CD8-positive, alpha-beta T cell (primary cell): ENCODE measurements at regions of chr21 and their contacts with region 1.

Region 1: DNA sequence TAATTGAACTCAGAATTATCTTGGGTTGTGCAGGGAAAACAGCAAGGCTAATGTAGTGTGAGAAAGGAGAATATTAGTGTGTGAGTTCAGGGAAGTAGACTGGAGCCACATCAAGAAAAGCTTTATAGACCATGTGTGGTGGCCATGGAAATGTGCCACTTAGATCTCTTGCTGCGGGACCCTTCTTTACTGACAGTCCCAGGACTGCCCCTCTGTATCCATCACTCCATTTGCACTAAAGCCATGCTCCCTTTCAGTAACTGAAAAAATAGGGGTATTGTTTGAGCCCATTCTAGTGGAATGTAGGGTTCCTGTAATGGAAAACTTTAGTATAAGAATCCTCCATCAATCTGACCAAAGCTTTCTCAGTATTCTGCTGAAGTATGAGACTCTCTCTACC is 32.3 kb downstream of the SAMSN1 start:
- DNase-seq: no peak
- ATAC-seq: no peak
- H3K4me3 ChIP-seq: no peak overlapping the region
- H3K4me3 Mint-ChIP-seq: no peak overlapping the region
- H3K27ac ChIP-seq: no peak overlapping the region
- H3K27ac Mint-ChIP-seq: no peak overlapping the region
- H3K4me1 ChIP-seq: no peaks in the 10 kb centered on the region
- H3K4me1 Mint-ChIP-seq: peaks cover 7% of the 10 kb centered on the region
- H3K27me3 ChIP-seq: no peaks in the 10 kb centered on the region
- H3K27me3 Mint-ChIP-seq: no peaks in the 10 kb centered on the region
- CTCF ChIP-seq: no peak

Region 2: DNA sequence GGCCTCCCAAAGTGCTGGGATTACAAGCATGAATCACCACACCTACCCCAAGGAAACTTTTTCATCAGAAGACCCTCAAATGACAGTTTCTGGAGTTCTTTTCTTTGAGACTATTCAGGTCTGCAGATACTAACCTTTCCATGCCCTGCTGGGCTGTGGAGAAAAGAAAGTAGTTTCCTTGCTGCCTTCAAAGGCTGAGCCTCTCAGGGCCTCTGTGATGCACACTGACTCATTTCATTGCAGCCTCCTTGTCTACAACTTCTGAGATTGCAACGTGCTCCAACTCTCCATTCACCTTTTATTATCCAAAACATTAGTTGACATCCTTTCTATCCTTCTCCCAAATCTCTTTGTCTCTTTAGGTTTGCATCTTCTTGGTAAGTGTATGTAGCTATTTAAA is 41.1 kb after region 1 on chr21:
- CTCF ChIA-PET with region 1: no interaction called
- POLR2A ChIA-PET with region 1: no interaction called
- intact Hi-C with region 1: loop called in 1 of 2 experiments (anchors 5 kb)
- DNase-seq: no peak
- ATAC-seq: peak; percentile 38
- H3K4me3 ChIP-seq: no peak overlapping the region
- H3K4me3 Mint-ChIP-seq: no peak overlapping the region
- H3K27ac ChIP-seq: no peak overlapping the region
- H3K27ac Mint-ChIP-seq: no peak overlapping the region
- H3K4me1 ChIP-seq: peaks cover 11% of the 10 kb centered on the region
- H3K4me1 Mint-ChIP-seq: peaks cover 25% of the 10 kb centered on the region
- H3K27me3 ChIP-seq: no peaks in the 10 kb centered on the region
- H3K27me3 Mint-ChIP-seq: no peaks in the 10 kb centered on the region
- CTCF ChIP-seq: no peak